ENCODE measurements at regions of chr4 and their contacts with region 1.

Region 1: GRCh38 chr4:112523764-112524505 is 8.0 kb upstream of the NEUROG2 start:
- DNase-seq: peak; percentile 86
- H3K4me3 Mint-ChIP-seq: peak overlapping the region; percentile 72
- H3K27ac Mint-ChIP-seq: no peak overlapping the region
- H3K4me1 Mint-ChIP-seq: peaks cover 31% of the 10 kb centered on the region
- H3K27me3 Mint-ChIP-seq: peaks cover 51% of the 10 kb centered on the region

Region 2: DNA sequence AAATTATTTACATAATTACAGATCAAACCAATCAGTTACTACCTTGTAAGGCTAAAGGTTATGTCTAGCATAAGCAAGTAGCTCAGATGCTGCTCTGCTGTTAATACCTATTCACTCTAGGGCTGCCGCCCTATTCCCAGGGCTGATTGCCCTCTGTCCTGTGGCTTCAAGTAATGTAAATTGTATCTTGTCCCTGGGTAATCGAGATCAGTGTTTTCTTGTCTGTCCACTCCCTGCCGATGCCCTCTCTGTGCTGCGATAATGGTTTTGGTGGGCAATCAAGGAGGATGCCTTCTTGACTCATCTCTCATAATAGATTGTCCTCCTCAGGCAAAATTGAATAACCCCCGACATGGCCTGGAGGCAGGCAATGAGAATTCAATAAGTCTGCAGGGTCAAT is 1260.1 kb before region 1 on chr4:
- CTCF ChIA-PET with region 1: no interaction called
- POLR2A ChIA-PET with region 1: no interaction called
- intact Hi-C with region 1: no loop called
- DNase-seq: no peak
- H3K4me3 Mint-ChIP-seq: no peak overlapping the region
- H3K27ac Mint-ChIP-seq: no peak overlapping the region
- H3K4me1 Mint-ChIP-seq: no peaks in the 10 kb centered on the region
- H3K27me3 Mint-ChIP-seq: no peaks in the 10 kb centered on the region

Region 3: GRCh38 chr4:111952688-111953087 is 571.2 kb before region 1 on chr4:
- CTCF ChIA-PET with region 1: no interaction called
- POLR2A ChIA-PET with region 1: no interaction called
- intact Hi-C with region 1: no loop called
- DNase-seq: no peak
- H3K4me3 Mint-ChIP-seq: no peak overlapping the region
- H3K27ac Mint-ChIP-seq: no peak overlapping the region
- H3K4me1 Mint-ChIP-seq: no peaks in the 10 kb centered on the region
- H3K27me3 Mint-ChIP-seq: no peaks in the 10 kb centered on the region

Region 4: GRCh38 chr4:112099701-112100297 is 424.1 kb before region 1 on chr4:
- CTCF ChIA-PET with region 1: interaction called, 22 read pairs
- POLR2A ChIA-PET with region 1: no interaction called
- intact Hi-C with region 1: loop called (anchors 1 kb)
- DNase-seq: no peak
- H3K4me3 Mint-ChIP-seq: no peak overlapping the region
- H3K27ac Mint-ChIP-seq: no peak overlapping the region
- H3K4me1 Mint-ChIP-seq: peaks cover 1% of the 10 kb centered on the region
- H3K27me3 Mint-ChIP-seq: peaks cover 2% of the 10 kb centered on the region

Region 5: GRCh38 chr4:112214390-112215264 is 309.3 kb before region 1 on chr4:
- CTCF ChIA-PET with region 1: interaction called, 22 read pairs
- POLR2A ChIA-PET with region 1: no interaction called
- intact Hi-C with region 1: loop called (anchors 1 kb)
- DNase-seq: no peak
- H3K4me3 Mint-ChIP-seq: no peak overlapping the region
- H3K27ac Mint-ChIP-seq: no peak overlapping the region
- H3K4me1 Mint-ChIP-seq: peaks cover 8% of the 10 kb centered on the region
- H3K27me3 Mint-ChIP-seq: no peaks in the 10 kb centered on the region

Region 6: DNA sequence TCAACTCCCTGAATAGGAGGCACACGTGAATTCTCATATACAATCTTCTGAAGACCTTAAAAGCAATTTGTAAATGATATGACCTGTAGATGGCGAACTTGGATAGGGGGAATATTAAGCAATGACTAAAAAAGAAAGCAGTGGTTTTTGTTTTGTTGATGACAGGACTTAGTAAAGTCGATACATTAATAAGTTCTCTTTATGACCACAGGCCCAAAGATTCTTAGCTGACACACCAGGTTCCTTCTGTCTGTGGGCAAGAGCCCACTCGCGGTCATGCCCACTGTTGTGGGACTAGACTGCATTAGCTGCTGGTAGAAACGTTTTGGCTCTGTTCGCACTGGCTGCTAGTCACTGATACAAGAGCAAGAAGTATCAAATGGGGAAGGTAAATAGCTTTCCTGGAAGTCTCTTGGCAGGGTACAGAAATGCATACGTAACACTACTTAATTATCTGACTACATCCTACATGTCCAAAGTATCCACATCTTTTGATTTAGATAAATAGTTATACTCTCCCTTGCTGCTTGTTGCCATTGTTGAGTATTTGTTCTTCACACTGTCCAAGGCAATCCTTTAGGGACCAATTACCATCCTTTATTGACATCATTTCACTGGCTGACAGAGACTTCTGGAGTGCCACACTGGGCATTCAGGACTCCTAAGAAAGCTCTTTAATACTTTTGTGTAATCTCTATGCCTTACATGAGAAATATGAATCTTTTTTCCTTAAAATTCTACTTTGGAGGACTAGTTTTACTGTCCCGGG is 195.8 kb before region 1 on chr4:
- CTCF ChIA-PET with region 1: interaction called, 44 read pairs
- POLR2A ChIA-PET with region 1: no interaction called
- intact Hi-C with region 1: loop called (anchors 1 kb)
- DNase-seq: peak; percentile 24
- H3K4me3 Mint-ChIP-seq: no peak overlapping the region
- H3K27ac Mint-ChIP-seq: no peak overlapping the region
- H3K4me1 Mint-ChIP-seq: peaks cover 5% of the 10 kb centered on the region
- H3K27me3 Mint-ChIP-seq: no peaks in the 10 kb centered on the region

Region 7: GRCh38 chr4:112765317-112765975 is 241.5 kb after region 1 on chr4:
- CTCF ChIA-PET with region 1: interaction called, 4 read pairs
- POLR2A ChIA-PET with region 1: no interaction called
- intact Hi-C with region 1: loop called (anchors 2 kb)
- DNase-seq: no peak
- H3K4me3 Mint-ChIP-seq: no peak overlapping the region
- H3K27ac Mint-ChIP-seq: no peak overlapping the region
- H3K4me1 Mint-ChIP-seq: no peaks in the 10 kb centered on the region
- H3K27me3 Mint-ChIP-seq: peaks cover 3% of the 10 kb centered on the region

Region 8: DNA sequence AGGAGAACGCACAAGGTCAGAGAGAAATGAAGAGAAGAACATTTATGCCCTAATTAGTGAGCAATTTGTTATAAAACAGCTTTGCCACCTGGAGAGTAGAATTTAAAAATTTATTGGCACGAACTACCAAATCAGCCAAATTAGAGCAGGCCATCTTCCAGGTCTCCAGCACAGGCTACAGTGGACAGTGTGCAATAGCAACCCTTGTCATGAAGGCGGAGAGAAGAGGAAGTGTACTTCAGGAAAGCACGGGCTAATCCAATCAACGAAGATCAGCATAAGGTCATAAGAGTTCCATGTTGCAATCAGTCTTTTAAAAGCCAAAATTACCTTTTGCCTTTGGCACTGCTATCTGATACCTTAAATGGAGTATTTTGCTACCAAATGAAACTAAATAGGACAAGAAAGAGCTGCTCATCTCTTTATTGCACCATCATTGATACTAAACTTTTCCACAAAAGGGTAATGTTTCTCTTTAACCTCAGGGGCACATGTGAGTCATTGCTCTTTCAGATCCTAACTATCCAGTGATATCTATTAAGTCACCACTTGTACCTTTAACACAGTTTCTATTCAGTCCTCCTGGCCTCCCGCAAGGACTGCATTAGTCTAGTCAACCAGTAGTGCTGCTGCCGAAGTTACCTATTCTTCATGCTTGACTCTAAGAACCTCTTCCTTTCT is 545.4 kb after region 1 on chr4:
- CTCF ChIA-PET with region 1: no interaction called
- POLR2A ChIA-PET with region 1: no interaction called
- intact Hi-C with region 1: no loop called
- DNase-seq: no peak
- H3K4me3 Mint-ChIP-seq: no peak overlapping the region
- H3K27ac Mint-ChIP-seq: no peak overlapping the region
- H3K4me1 Mint-ChIP-seq: no peaks in the 10 kb centered on the region
- H3K27me3 Mint-ChIP-seq: peaks cover 3% of the 10 kb centered on the region

Measured in activated CD4-positive, alpha-beta memory T cell treated with anti-CD3 and anti-CD28 coated beads for 36 hours (primary cell).